GM10248 (cell line): ENCODE measurements at regions of chr4 and their contacts with region 1.

Region 1: DNA sequence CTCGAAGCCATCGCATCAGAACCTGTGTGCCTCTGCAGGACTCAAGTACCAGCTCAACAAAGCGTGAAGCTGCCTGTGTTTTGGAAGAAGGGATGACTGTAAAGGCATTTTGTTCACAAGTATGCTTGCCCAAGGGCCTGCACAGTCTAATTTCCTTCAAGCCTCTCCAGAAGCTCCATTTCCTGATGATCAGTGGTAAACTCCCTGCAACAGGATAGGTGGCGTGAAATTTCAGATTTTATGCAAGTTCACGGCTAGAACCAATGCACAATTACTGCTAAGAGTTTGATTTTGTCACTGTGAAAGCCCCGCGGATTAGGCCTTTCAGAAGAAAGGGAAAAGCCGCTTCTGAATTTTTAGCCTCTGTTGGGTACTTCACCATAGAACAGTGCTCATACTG is 89.2 kb upstream of the TAPT1 start:
- DNase-seq: no peak
- CTCF ChIP-seq: no peak

Region 2: GRCh38 chr4:15982842-15983524 is 332.5 kb before region 1 on chr4:
- CTCF ChIA-PET with region 1: no interaction called
- POLR2A ChIA-PET with region 1: no interaction called
- DNase-seq: no peak
- CTCF ChIP-seq: no peak

Region 3: GRCh38 chr4:16302619-16303018 is 12.8 kb before region 1 on chr4:
- CTCF ChIA-PET with region 1: interaction called, 17 read pairs
- POLR2A ChIA-PET with region 1: no interaction called
- DNase-seq: no peak
- CTCF ChIP-seq: no peak